CD8-positive, alpha-beta T cell (primary cell): ENCODE measurements at regions of chr1 and their contacts with region 1.

Region 1: GRCh38 chr1:48776393-48777218 is at the start of gene BEND5:
- DNase-seq: peak; percentile 24 to 86 (median 72)
- ATAC-seq: peak; percentile 90
- H3K4me3 ChIP-seq: peak within 1 kb of the TSS; percentile 57 to 89
- H3K4me3 Mint-ChIP-seq: peak within 1 kb of the TSS; percentile 92
- H3K27ac ChIP-seq: peak within 1 kb of the TSS; percentile 39 to 47
- H3K27ac Mint-ChIP-seq: peak within 1 kb of the TSS; percentile 94
- H3K4me1 ChIP-seq: peaks cover 16% of the 10 kb centered on the region
- H3K4me1 Mint-ChIP-seq: peaks cover 53% of the 10 kb centered on the region
- H3K27me3 ChIP-seq: no peaks in the 10 kb centered on the region
- H3K27me3 Mint-ChIP-seq: peaks cover 6% of the 10 kb centered on the region
- CTCF ChIP-seq: no peak
- total RNA-seq, gene BEND5: 9.4 to 13.1 TPM

Region 2: DNA sequence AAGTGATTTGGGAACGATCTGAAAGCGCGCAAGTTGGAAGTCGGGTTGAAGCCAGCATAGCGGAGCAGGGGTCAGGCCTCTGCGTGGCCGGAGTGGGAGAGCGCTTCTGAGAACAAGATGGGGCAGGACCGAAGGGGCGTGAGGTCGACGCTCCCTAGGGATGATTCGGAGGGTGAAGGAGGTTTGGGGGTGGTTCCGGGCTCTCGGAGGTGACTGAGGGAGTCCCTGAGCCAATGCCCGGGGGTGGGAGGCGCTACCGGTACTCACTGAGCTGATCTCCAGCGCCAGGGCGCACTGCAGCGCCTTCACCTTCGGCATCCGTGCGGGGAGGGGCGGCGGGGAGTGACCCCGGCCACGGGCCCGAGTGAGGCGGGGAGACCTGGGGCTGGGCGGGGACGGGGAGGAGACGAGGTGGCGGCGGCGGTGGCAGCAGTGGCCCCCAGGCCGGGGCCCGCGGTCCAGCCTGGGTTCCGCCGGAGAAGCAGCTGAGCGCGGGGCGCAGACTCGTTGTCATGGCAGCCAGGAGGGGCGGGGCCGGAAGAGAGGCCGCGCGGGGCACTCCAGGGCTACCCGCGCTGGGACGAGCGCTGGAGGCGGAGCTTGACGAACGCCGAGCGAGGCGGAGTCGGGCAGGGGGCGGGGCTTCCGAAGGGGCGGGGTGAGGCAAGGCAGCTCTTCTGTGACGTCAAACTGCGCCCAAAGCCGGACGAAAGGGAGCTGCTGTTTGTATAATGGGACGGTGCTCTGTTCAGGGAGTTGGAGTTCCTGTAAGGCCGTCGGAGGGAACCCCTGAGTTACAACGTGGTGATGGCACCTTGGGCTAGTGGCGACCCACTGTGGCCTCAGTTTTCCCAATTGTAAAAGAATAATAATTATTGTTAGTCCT is 304.7 kb before region 1 on chr1 and contains the start of gene SPATA6:
- CTCF ChIA-PET with region 1: no interaction called
- POLR2A ChIA-PET with region 1: no interaction called
- intact Hi-C with region 1: loop called (anchors 2 to 5 kb)
- DNase-seq: peak; percentile 84 to 94 (median 91)
- ATAC-seq: peak; percentile 94
- H3K4me3 ChIP-seq: peak within 1 kb of the TSS; percentile 67 to 85
- H3K4me3 Mint-ChIP-seq: peak within 1 kb of the TSS; percentile 91
- H3K27ac ChIP-seq: peak within 1 kb of the TSS; percentile 57 to 78
- H3K27ac Mint-ChIP-seq: peak within 1 kb of the TSS; percentile 73
- H3K4me1 ChIP-seq: peaks cover 19% of the 10 kb centered on the region
- H3K4me1 Mint-ChIP-seq: peaks cover 32% of the 10 kb centered on the region
- H3K27me3 ChIP-seq: no peaks in the 10 kb centered on the region
- H3K27me3 Mint-ChIP-seq: peaks cover 4% of the 10 kb centered on the region
- CTCF ChIP-seq: no peak
- total RNA-seq, gene SPATA6: 2.1 to 2.5 TPM

Region 3: GRCh38 chr1:48750109-48750508 is 26.5 kb before region 1 on chr1:
- CTCF ChIA-PET with region 1: no interaction called
- POLR2A ChIA-PET with region 1: no interaction called
- intact Hi-C with region 1: no loop called
- DNase-seq: peak in 1 of 9 experiments; percentile 7
- ATAC-seq: no peak
- H3K4me3 ChIP-seq: no peak overlapping the region
- H3K4me3 Mint-ChIP-seq: no peak overlapping the region
- H3K27ac ChIP-seq: no peak overlapping the region
- H3K27ac Mint-ChIP-seq: no peak overlapping the region
- H3K4me1 ChIP-seq: no peaks in the 10 kb centered on the region
- H3K4me1 Mint-ChIP-seq: no peaks in the 10 kb centered on the region
- H3K27me3 ChIP-seq: no peaks in the 10 kb centered on the region
- H3K27me3 Mint-ChIP-seq: no peaks in the 10 kb centered on the region
- CTCF ChIP-seq: no peak